Heart right ventricle (tissue), 16 donors: ENCODE measurements at regions of chr4 and their contacts with region 1.

Region 1: DNA sequence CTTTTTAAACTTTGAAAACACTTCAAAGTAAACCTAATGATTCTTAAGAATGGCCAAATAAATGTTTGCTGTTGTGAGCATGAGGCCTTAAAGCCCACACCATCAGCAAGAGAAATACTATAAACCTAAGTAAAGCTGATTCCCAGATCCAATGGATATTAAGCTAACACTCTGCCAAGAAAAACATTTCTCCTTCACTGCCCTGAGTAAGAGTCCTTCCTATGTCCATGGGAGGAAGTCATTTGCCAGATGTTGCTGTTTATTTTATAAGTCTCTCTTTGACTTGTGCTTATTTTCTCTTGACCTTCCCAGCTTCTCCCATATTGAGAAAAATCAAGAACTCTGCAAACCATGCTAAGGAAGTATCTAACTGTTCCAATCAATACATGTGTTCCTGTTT is 154.3 kb upstream of the EDNRA start:
- DNase-seq: no peak
- ATAC-seq: peak in 6 of 8 donors; percentile 39 to 82 (median 58)
- H3K4me3 ChIP-seq: no peak overlapping the region
- H3K27ac ChIP-seq: peak overlapping the region in 6 of 10 donors; percentile 24 to 65 (median 55)
- H3K4me1 ChIP-seq: peaks cover 0 to 28% (median 15%) of the 10 kb centered on the region in 9 donors
- H3K27me3 ChIP-seq: no peaks in the 10 kb centered on the region
- CTCF ChIP-seq: no peak

Region 2: DNA sequence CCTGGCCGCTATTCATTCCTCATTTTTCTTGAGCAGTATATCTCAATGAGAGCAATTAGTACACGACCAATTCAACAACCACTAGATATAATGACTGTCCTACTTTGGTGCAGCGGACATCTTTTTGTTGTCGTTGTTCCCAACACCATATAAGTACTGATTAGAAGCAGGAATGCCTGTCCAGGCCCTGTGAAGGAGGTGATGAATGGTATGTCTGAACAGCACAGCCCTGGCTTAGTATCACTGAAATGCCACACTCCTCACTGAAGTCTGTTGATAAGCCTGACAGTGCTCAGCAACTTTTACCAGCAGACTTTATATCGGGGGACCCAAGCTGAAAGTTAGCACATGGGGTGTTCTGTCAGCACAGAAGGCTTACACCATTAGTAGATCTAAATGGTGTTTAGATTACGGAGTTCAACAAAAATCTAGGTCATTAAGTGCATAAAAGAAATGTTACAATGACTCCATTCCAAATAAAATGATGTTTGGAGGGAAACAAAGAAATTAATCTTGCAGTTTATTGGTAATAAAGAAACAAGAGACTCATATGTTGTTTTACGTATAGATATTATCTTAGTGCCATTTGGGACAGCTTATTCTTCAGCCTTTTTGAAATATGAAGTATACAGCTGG is 152.7 kb before region 1 on chr4:
- intact Hi-C with region 1: loop called in 1 of 10 experiments (anchors 10 kb)
- DNase-seq: peak in 1 of 2 donors; percentile 48
- ATAC-seq: peak; percentile 93 to 100 (median 99)
- H3K4me3 ChIP-seq: no peak overlapping the region
- H3K27ac ChIP-seq: peak overlapping the region in 5 of 10 donors; percentile 11 to 57 (median 32)
- H3K4me1 ChIP-seq: peaks cover 0 to 12% (median 0%) of the 10 kb centered on the region in 9 donors
- H3K27me3 ChIP-seq: no peaks in the 10 kb centered on the region
- CTCF ChIP-seq: no peak